Activated CD8-positive, alpha-beta T cell treated with anti-CD3 and anti-CD28 coated beads for 36 hours (primary cell): ENCODE measurements at regions of chr2 and their contacts with region 1.

Region 1: DNA sequence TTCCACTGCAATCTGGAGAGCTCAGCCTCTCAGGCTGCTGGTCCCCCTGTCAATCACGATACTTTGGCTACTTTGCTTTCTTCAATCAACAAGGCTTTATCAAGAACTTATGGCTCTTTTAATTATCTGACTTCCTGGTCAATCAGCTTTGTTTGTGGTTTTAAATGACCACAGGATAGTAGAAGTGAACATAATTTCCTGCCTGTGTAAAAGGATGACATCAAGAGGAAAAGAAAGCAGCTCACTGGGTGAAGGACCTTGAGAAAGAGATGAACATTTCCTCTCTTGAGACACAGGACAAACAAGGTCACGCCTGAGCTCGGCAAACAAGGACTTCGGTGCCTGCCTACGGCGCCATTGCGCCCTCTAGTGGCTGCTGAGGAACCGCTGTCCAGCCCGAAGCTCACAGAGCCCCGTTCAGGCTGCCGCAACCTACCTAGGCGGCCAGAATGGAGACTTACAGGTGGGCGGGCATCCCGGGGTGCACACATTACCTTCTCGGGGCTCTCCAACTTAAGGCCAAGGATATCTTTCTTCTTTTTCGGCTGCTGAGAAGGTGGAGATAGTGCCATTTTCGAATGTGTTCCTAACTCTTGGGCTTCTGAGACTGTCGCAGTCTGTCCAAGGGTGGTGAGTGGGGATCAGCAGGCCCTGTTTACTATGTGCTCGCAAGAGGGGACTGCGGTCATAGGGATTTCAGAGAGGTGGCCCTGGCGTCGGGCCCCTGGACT is 54.0 kb downstream of the IL1RL2 start:
- DNase-seq: peak; percentile 92
- ATAC-seq: peak; percentile 90
- H3K4me3 Mint-ChIP-seq: no peak overlapping the region
- H3K27ac Mint-ChIP-seq: peak overlapping the region; percentile 65
- H3K4me1 Mint-ChIP-seq: peaks cover 32% of the 10 kb centered on the region
- H3K27me3 Mint-ChIP-seq: no peaks in the 10 kb centered on the region
- CTCF ChIP-seq: peak; percentile 92

Region 2: GRCh38 chr2:102020596-102021181 is 220.1 kb before region 1 on chr2:
- CTCF ChIA-PET with region 1: interaction called, 222 read pairs
- POLR2A ChIA-PET with region 1: interaction called, 5 read pairs
- intact Hi-C with region 1: loop called (anchors 2 kb)
- DNase-seq: peak; percentile 90
- ATAC-seq: peak; percentile 100
- H3K4me3 Mint-ChIP-seq: no peak overlapping the region
- H3K27ac Mint-ChIP-seq: no peak overlapping the region
- H3K4me1 Mint-ChIP-seq: peaks cover 9% of the 10 kb centered on the region
- H3K27me3 Mint-ChIP-seq: peaks cover 4% of the 10 kb centered on the region
- CTCF ChIP-seq: peak; percentile 99

Region 3: GRCh38 chr2:102063941-102064678 is 176.7 kb before region 1 on chr2:
- CTCF ChIA-PET with region 1: interaction called, 22 read pairs
- POLR2A ChIA-PET with region 1: interaction called, 4 read pairs
- intact Hi-C with region 1: no loop called
- DNase-seq: peak; percentile 57
- ATAC-seq: peak; percentile 9
- H3K4me3 Mint-ChIP-seq: no peak overlapping the region
- H3K27ac Mint-ChIP-seq: peak overlapping the region; percentile 16
- H3K4me1 Mint-ChIP-seq: peaks cover 31% of the 10 kb centered on the region
- H3K27me3 Mint-ChIP-seq: peaks cover 1% of the 10 kb centered on the region
- CTCF ChIP-seq: no peak

Region 4: DNA sequence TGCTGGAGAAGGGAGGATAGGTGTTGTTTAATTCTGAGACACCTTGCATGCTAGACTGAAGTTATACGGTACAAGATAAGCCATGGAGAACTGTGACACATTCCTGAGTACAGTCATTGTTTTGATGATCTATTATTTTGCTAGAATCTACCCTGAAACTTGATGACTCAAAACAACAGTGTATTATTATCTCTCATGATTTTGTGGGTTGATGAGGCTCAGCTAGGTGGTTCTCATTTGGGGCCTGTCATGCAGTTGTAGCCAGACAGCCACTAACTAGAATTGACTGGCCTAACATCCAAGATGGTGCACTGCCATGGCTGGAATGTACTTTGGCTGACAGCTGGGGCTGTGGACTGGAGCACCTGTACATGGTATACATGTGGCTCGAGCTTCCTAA is 103.7 kb before region 1 on chr2:
- CTCF ChIA-PET with region 1: interaction called, 15 read pairs
- POLR2A ChIA-PET with region 1: interaction called, 5 read pairs
- intact Hi-C with region 1: no loop called
- DNase-seq: peak; percentile 57
- ATAC-seq: peak; percentile 87
- H3K4me3 Mint-ChIP-seq: no peak overlapping the region
- H3K27ac Mint-ChIP-seq: peak overlapping the region; percentile 75
- H3K4me1 Mint-ChIP-seq: peaks cover 37% of the 10 kb centered on the region
- H3K27me3 Mint-ChIP-seq: peaks cover 15% of the 10 kb centered on the region
- CTCF ChIP-seq: no peak

Region 5: GRCh38 chr2:102209474-102209873 is 31.3 kb before region 1 on chr2:
- CTCF ChIA-PET with region 1: interaction called, 23 read pairs
- POLR2A ChIA-PET with region 1: no interaction called
- intact Hi-C with region 1: no loop called
- DNase-seq: no peak
- ATAC-seq: no peak
- H3K4me3 Mint-ChIP-seq: no peak overlapping the region
- H3K27ac Mint-ChIP-seq: no peak overlapping the region
- H3K4me1 Mint-ChIP-seq: no peaks in the 10 kb centered on the region
- H3K27me3 Mint-ChIP-seq: peaks cover 1% of the 10 kb centered on the region
- CTCF ChIP-seq: no peak

Region 6: GRCh38 chr2:102301867-102302362 is 61.1 kb after region 1 on chr2:
- CTCF ChIA-PET with region 1: interaction called, 11 read pairs
- POLR2A ChIA-PET with region 1: no interaction called
- intact Hi-C with region 1: no loop called
- DNase-seq: peak; percentile 83
- ATAC-seq: peak; percentile 91
- H3K4me3 Mint-ChIP-seq: peak overlapping the region; percentile 56
- H3K27ac Mint-ChIP-seq: peak overlapping the region; percentile 86
- H3K4me1 Mint-ChIP-seq: peaks cover 52% of the 10 kb centered on the region
- H3K27me3 Mint-ChIP-seq: no peaks in the 10 kb centered on the region
- CTCF ChIP-seq: no peak

Region 7: DNA sequence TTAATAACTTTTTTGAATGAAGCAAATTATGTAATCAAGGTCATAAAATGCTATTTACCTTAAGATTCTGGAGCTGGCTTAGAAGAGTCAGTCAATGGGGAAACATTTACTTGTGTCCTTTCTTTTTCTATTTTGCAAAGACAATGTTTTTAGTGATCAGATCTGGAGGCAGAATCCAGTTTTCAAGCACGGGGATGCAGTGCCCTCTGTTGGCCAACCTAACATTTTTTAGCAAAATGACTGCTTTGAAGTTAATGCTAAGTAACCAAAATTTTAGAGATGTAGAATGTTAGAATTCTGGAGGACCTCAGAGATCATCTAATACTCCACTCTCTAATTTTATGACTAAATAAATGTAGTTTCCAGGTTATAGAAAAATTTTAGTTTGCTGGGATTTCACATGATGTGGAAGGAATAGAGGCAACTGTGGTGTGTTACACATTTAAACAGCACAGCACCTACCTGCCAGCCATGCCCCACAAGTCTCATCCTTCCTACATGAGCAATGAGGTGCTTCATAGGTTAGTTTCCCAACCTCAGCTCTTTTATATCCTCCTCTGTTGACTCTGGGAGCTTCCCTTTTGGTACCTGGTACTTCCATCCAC is 208.7 kb after region 1 on chr2:
- CTCF ChIA-PET with region 1: interaction called, 68 read pairs
- POLR2A ChIA-PET with region 1: no interaction called
- intact Hi-C with region 1: no loop called
- DNase-seq: peak; percentile 75
- ATAC-seq: peak; percentile 47
- H3K4me3 Mint-ChIP-seq: no peak overlapping the region
- H3K27ac Mint-ChIP-seq: no peak overlapping the region
- H3K4me1 Mint-ChIP-seq: peaks cover 10% of the 10 kb centered on the region
- H3K27me3 Mint-ChIP-seq: no peaks in the 10 kb centered on the region
- CTCF ChIP-seq: peak; percentile 80